Colonic mucosa (tissue), 4 donors: ENCODE measurements at regions of chr11 and their contacts with region 1.

Region 1: DNA sequence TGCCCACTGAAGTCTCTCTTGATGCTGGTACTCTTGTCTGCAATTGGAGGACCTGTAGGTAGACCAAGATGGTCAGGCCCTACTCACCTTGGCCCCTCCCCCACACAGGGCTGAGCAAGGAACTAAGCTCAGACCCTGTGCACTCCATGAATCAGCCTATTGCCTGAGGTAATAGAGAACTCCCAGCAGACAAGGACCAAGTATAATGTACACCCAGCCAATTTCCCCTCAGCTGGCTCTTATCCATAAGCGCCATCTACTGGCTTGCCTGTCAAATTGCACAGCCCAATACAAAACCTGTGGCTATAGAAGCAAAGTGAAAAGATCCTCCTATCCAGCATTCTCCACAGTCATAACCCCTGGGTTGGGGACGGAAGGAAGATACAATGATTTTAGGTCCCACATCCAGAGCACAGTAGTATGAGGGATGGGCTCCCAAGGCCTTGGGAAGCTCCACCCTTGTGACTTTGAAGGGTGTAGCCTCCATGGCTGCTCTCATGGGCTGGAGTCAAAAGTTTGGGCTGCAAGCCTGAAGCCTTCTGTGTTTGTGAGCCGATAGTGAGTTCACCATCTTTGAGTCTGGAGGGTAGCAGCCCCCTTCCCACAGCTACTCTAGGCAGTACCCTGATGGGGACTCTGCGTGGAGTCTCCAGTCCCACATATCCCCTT is 56.0 kb downstream of the GLYATL2 start:
- DNase-seq: peak; percentile 45
- H3K4me3 ChIP-seq: no peak overlapping the region
- H3K27ac ChIP-seq: no peak overlapping the region
- H3K4me1 ChIP-seq: no peaks in the 10 kb centered on the region
- H3K27me3 ChIP-seq: no peaks in the 10 kb centered on the region
- CTCF ChIP-seq: peak; percentile 16

Region 2: GRCh38 chr11:58675334-58676155 is 112.9 kb before region 1 on chr11:
- intact Hi-C with region 1: loop called (anchors 10 kb)
- DNase-seq: peak; percentile 82
- H3K4me3 ChIP-seq: no peak overlapping the region
- H3K27ac ChIP-seq: no peak overlapping the region
- H3K4me1 ChIP-seq: no peaks in the 10 kb centered on the region
- H3K27me3 ChIP-seq: no peaks in the 10 kb centered on the region
- CTCF ChIP-seq: peak; percentile 93

Region 3: GRCh38 chr11:58980159-58980843 is 191.8 kb after region 1 on chr11:
- intact Hi-C with region 1: no loop called
- DNase-seq: no peak
- H3K4me3 ChIP-seq: no peak overlapping the region
- H3K27ac ChIP-seq: no peak overlapping the region
- H3K4me1 ChIP-seq: no peaks in the 10 kb centered on the region
- H3K27me3 ChIP-seq: no peaks in the 10 kb centered on the region
- CTCF ChIP-seq: no peak